WTC11 (cell line): ENCODE measurements at regions of chr3 and their contacts with region 1.

Region 1: DNA sequence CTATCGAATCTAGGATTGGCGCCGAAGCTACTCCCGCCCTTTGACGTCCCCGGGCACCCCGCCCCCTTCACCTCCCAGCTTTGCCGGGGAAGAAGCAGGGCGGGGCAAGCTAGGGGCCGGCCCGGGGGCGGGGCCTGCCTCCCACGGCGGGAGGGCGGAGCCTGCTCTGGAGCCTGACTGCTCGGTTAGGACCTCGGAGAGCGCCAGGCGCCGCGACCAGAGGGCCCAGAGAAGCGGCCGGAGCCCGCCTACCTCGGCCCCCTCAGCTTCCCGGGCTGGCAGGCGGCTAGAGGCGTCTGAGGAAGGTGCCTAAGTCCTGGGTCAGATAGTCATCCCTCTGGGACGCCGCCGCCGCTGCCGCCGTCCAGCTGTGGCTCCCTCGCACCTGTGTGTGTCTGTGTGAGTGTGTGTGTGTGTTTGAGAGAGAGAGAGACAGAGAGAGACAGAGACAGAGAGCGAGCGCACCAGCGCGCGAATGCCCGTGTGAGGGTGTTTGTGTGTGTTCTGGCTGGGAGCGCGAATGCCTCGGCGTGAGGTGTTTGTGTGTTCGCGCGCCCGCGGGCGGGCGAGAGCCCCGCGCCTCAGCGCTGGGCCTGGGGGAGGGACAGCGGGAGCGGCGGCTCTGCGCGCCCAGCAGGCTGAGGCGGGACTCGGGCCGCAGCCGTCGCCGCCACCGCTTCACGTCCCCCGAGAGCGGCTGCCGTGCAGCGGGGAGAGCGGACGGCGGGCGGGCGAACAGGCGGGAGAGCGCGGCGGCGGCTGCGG is at the start of gene STXBP5L:
- DNase-seq: peak; percentile 99
- ATAC-seq: peak; percentile 7
- H3K4me3 Mint-ChIP-seq: peak within 1 kb of the TSS; percentile 91
- H3K27ac Mint-ChIP-seq: peak within 1 kb of the TSS; percentile 97
- H3K4me1 Mint-ChIP-seq: peaks cover 11% of the 10 kb centered on the region
- H3K27me3 Mint-ChIP-seq: peaks cover 3% of the 10 kb centered on the region; the same call in 1 of the 2 replicates
- CTCF ChIP-seq: no peak
- total RNA-seq, gene STXBP5L: 5.8 to 5.9 TPM (median 5.8 TPM) in 3 replicates

Region 2: GRCh38 chr3:120730576-120731542 is 177.4 kb before region 1 on chr3:
- CTCF ChIA-PET with region 1: no interaction called
- POLR2A ChIA-PET with region 1: interaction called, 11 read pairs
- DNase-seq: peak; percentile 17
- ATAC-seq: peak; percentile 84
- H3K4me3 Mint-ChIP-seq: 0 out of 2 replicates have a peak overlapping the region, but pooled peaks have one; percentile 2
- H3K27ac Mint-ChIP-seq: peak overlapping the region; percentile 66; the same call in 1 of the 2 replicates
- H3K4me1 Mint-ChIP-seq: peaks cover 20% of the 10 kb centered on the region
- H3K27me3 Mint-ChIP-seq: 0 out of 2 replicates have a peak, but pooled peaks cover 2% of the 10 kb centered on the region
- CTCF ChIP-seq: no peak

Region 3: GRCh38 chr3:120831066-120831465 is 77.1 kb before region 1 on chr3:
- CTCF ChIA-PET with region 1: no interaction called
- POLR2A ChIA-PET with region 1: no interaction called
- DNase-seq: peak; percentile 31
- ATAC-seq: peak; percentile 65
- H3K4me3 Mint-ChIP-seq: no peak overlapping the region
- H3K27ac Mint-ChIP-seq: no peak overlapping the region
- H3K4me1 Mint-ChIP-seq: peaks cover 25% of the 10 kb centered on the region
- H3K27me3 Mint-ChIP-seq: peaks cover 38% of the 10 kb centered on the region
- CTCF ChIP-seq: no peak